RWPE1 (cell line): ENCODE measurements at regions of chr15 and their contacts with region 1.

Region 1: GRCh38 chr15:98428253-98428989 is 219.9 kb upstream of the IGF1R start:
- DNase-seq: peak; percentile 76
- H3K27ac ChIP-seq: peak overlapping the region; percentile 66
- CTCF ChIP-seq: peak; percentile 96

Region 2: GRCh38 chr15:98311566-98312188 is 116.7 kb before region 1 on chr15:
- CTCF ChIA-PET with region 1: interaction called, 21 read pairs
- POLR2A ChIA-PET with region 1: no interaction called
- DNase-seq: peak; percentile 65
- H3K27ac ChIP-seq: no peak overlapping the region
- CTCF ChIP-seq: peak; percentile 92

Region 3: DNA sequence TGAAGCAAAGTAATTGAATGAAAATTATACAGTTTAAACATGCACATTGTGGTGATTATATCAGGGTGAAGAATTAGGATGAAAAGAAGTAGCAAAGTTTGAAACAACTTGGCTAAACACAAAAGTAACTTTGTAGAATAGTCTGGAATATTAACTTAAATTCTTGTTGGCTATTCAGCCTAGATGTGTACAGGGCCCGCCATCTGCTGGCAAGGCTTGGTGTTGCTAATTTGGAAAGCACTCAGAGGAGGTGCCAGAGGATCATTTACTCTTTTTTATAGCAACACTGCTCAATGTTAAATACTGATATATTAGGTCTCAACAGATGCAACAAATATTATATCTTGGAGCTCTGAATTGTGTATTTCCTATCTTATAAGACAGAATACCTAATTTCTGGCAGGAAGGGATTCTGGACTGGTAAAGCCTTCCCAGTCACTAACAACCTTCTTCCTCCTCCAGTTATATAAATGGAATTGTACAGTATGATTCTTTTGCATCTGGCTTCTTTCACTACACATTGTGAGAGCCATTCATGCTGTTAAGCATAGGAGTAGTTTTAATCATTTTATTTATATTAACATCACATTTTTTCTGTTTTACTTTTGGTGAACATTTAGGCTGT is 784.9 kb after region 1 on chr15:
- CTCF ChIA-PET with region 1: no interaction called
- POLR2A ChIA-PET with region 1: no interaction called
- DNase-seq: peak; percentile 70
- H3K27ac ChIP-seq: no peak overlapping the region
- CTCF ChIP-seq: peak; percentile 97